Esophagus muscularis mucosa (tissue), 4 donors: ENCODE measurements at regions of chr17 and their contacts with region 1.

Region 1: GRCh38 chr17:75405365-75406221 is at the start of gene GRB2:
- DNase-seq: peak; percentile 99
- H3K4me3 ChIP-seq: peak within 1 kb of the TSS; percentile 99 to 100 (median 100)
- H3K27ac ChIP-seq: peak within 1 kb of the TSS; percentile 93 to 98 (median 97)
- H3K4me1 ChIP-seq: peaks cover 23 to 52% (median 41%) of the 10 kb centered on the region in 4 donors
- H3K27me3 ChIP-seq: no peaks in the 10 kb centered on the region
- CTCF ChIP-seq: peak in 2 of 3 experiments; percentile 24 to 32
- EP300 ChIP-seq: no peak
- POLR2A ChIP-seq: peak; percentile 70
- total RNA-seq, gene GRB2: 84.3 to 140 (median 113) TPM

Region 2: GRCh38 chr17:75271233-75271954 is 134.2 kb before region 1 on chr17:
- intact Hi-C with region 1: loop called (anchors 5 kb)
- DNase-seq: no peak
- H3K4me3 ChIP-seq: peak overlapping the region; percentile 88 to 90 (median 90)
- H3K27ac ChIP-seq: peak overlapping the region; percentile 96 to 98 (median 97)
- H3K4me1 ChIP-seq: peaks cover 27 to 57% (median 43%) of the 10 kb centered on the region in 4 donors
- H3K27me3 ChIP-seq: peaks cover 0 to 4% (median 0%) of the 10 kb centered on the region in 4 donors
- CTCF ChIP-seq: peak; percentile 86 to 97 (median 90)
- EP300 ChIP-seq: no peak
- POLR2A ChIP-seq: no peak

Region 3: GRCh38 chr17:75319904-75320691 is 85.5 kb before region 1 on chr17:
- intact Hi-C with region 1: loop called (anchors 2 kb)
- DNase-seq: no peak
- H3K4me3 ChIP-seq: no peak overlapping the region
- H3K27ac ChIP-seq: peak overlapping the region in 1 of 4 donors; percentile 27
- H3K4me1 ChIP-seq: peaks cover 6 to 19% (median 15%) of the 10 kb centered on the region in 4 donors
- H3K27me3 ChIP-seq: no peaks in the 10 kb centered on the region
- CTCF ChIP-seq: no peak
- EP300 ChIP-seq: no peak
- POLR2A ChIP-seq: no peak